PC-9 (cell line): ENCODE measurements at regions of chr1 and their contacts with region 1.

Region 1: DNA sequence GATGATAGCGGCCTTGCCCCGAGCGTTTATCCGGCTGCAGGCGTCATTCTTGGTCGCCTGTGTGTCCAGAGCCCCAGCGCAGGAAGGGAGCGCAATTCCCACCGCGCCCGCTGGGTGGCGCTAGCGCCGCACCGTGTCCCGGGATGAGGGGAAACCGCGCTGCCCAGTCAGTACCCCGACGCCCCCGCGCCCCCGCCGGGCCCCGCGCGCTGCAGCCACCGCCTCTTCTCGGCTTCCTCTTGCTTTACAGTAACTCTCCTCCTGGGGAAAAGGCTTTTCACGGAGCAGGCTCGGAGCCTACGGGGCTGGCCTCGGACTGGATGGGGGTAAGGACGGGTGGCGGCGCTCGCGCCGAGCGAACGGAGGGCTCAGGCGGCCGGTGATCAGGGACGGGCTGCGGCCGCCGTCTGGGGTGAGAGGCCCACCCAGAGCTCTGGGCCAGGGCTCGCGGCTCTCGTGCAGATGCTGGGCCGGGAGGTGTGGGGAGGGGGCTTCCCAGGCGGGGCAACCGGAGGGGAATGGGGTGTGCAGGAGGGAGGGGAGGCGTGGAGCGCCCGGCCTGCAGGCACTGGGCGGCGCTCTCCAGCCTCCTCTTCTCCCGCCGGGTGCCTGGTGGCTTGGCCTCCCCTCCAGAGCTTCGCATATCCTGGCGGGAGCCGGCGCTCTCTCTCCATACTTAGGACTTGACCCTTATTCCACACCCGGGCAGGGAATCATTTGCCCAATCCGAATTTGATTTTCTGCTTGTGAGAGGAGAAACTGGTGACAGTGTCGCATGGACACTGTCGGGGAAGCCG is 29.8 kb downstream of the TEX35 start:
- DNase-seq: peak; percentile 70 to 94
- H3K4me3 ChIP-seq: peak overlapping the region; percentile 67
- H3K27ac ChIP-seq: peak overlapping the region; percentile 58
- H3K4me1 ChIP-seq: peaks cover 52% of the 10 kb centered on the region
- H3K27me3 ChIP-seq: no peaks in the 10 kb centered on the region
- CTCF ChIP-seq: peak; percentile 99

Region 2: DNA sequence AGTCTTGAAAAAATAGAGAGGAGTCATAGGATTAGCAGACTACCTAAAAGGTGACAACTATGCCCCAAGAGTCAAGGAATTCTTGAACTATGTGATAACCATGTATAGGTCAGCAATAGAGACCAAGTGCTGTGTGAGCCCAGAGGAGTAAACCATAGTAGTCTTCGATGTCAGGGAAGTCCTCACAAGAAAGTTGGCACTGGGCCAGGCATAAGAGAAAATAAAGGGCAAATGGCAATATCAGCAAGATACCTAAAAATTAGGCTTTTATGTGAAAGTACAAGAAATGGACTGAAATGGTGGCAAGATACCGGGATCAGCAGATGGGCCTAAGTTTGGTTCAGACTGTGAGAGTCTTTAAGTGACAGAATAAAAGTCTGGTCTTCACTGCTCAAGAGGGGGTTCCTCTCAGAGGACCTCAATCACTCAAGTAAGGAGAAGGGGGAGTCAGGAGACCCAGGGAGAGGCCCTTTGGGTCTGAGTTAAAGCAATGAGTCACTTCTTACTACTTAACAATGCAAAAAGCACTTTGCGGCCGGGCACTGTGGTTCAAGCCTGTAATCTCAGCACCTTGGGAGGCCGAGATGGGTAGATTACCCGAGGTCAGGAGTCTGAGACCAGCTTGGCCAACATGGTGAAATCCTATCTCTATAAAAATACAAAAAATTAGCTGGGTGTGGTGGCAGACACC is 65.1 kb after region 1 on chr1:
- CTCF ChIA-PET with region 1: interaction called, 14 read pairs
- POLR2A ChIA-PET with region 1: no interaction called
- intact Hi-C with region 1: no loop called
- DNase-seq: no peak
- H3K4me3 ChIP-seq: no peak overlapping the region
- H3K27ac ChIP-seq: peak overlapping the region; percentile 92
- H3K4me1 ChIP-seq: peaks cover 44% of the 10 kb centered on the region
- H3K27me3 ChIP-seq: no peaks in the 10 kb centered on the region
- CTCF ChIP-seq: no peak

Region 3: GRCh38 chr1:178625701-178626100 is 82.9 kb after region 1 on chr1:
- CTCF ChIA-PET with region 1: no interaction called
- POLR2A ChIA-PET with region 1: no interaction called
- intact Hi-C with region 1: no loop called
- DNase-seq: no peak
- H3K4me3 ChIP-seq: no peak overlapping the region
- H3K27ac ChIP-seq: no peak overlapping the region
- H3K4me1 ChIP-seq: no peaks in the 10 kb centered on the region
- H3K27me3 ChIP-seq: no peaks in the 10 kb centered on the region
- CTCF ChIP-seq: no peak

Region 4: GRCh38 chr1:178725603-178726517 is 183.1 kb after region 1 on chr1:
- CTCF ChIA-PET with region 1: interaction called, 9 read pairs
- POLR2A ChIA-PET with region 1: interaction called, 19 read pairs
- intact Hi-C with region 1: loop called (anchors 1 kb)
- DNase-seq: peak; percentile 69 to 88
- H3K4me3 ChIP-seq: peak overlapping the region; percentile 84
- H3K27ac ChIP-seq: peak overlapping the region; percentile 83
- H3K4me1 ChIP-seq: peaks cover 36% of the 10 kb centered on the region
- H3K27me3 ChIP-seq: no peaks in the 10 kb centered on the region
- CTCF ChIP-seq: no peak

Region 5: GRCh38 chr1:178774263-178774662 is 231.5 kb after region 1 on chr1:
- CTCF ChIA-PET with region 1: interaction called, 5 read pairs
- POLR2A ChIA-PET with region 1: no interaction called
- intact Hi-C with region 1: loop called (anchors 2 kb)
- DNase-seq: no peak
- H3K4me3 ChIP-seq: no peak overlapping the region
- H3K27ac ChIP-seq: no peak overlapping the region
- H3K4me1 ChIP-seq: no peaks in the 10 kb centered on the region
- H3K27me3 ChIP-seq: no peaks in the 10 kb centered on the region
- CTCF ChIP-seq: peak; percentile 73

Region 6: DNA sequence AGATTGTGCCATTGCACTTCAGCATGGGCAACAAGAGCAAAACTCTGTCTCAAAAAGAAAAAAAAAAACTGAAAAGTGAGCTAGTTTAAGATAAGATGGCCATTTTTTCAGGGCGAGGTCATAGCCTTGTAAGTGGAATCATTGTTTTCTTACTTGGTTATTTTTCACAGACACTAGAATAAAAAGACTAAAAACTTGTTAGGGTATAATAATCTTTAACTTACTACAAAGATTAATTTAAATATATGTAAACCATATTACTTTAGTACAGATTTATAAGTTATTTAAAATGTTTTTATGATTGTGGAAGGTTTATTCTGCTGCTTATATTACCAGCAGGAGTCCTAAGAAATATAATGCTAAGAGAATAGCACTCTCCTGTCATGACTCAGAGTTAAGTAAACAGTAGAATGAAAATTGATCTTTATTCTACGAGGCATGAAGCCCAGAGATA is 304.7 kb after region 1 on chr1:
- CTCF ChIA-PET with region 1: interaction called, 3 read pairs
- POLR2A ChIA-PET with region 1: no interaction called
- intact Hi-C with region 1: loop called (anchors 5 kb)
- DNase-seq: peak in 1 of 2 experiments; percentile 59
- H3K4me3 ChIP-seq: no peak overlapping the region
- H3K27ac ChIP-seq: peak overlapping the region; percentile 45
- H3K4me1 ChIP-seq: peaks cover 18% of the 10 kb centered on the region
- H3K27me3 ChIP-seq: no peaks in the 10 kb centered on the region
- CTCF ChIP-seq: no peak

Region 7: GRCh38 chr1:179241523-179242097 is 698.9 kb after region 1 on chr1:
- CTCF ChIA-PET with region 1: interaction called, 19 read pairs
- POLR2A ChIA-PET with region 1: no interaction called
- intact Hi-C with region 1: no loop called
- DNase-seq: no peak
- H3K4me3 ChIP-seq: no peak overlapping the region
- H3K27ac ChIP-seq: no peak overlapping the region
- H3K4me1 ChIP-seq: no peaks in the 10 kb centered on the region
- H3K27me3 ChIP-seq: no peaks in the 10 kb centered on the region
- CTCF ChIP-seq: no peak